ENCODE measurements at regions of chr7 and their contacts with region 1.

Region 1: DNA sequence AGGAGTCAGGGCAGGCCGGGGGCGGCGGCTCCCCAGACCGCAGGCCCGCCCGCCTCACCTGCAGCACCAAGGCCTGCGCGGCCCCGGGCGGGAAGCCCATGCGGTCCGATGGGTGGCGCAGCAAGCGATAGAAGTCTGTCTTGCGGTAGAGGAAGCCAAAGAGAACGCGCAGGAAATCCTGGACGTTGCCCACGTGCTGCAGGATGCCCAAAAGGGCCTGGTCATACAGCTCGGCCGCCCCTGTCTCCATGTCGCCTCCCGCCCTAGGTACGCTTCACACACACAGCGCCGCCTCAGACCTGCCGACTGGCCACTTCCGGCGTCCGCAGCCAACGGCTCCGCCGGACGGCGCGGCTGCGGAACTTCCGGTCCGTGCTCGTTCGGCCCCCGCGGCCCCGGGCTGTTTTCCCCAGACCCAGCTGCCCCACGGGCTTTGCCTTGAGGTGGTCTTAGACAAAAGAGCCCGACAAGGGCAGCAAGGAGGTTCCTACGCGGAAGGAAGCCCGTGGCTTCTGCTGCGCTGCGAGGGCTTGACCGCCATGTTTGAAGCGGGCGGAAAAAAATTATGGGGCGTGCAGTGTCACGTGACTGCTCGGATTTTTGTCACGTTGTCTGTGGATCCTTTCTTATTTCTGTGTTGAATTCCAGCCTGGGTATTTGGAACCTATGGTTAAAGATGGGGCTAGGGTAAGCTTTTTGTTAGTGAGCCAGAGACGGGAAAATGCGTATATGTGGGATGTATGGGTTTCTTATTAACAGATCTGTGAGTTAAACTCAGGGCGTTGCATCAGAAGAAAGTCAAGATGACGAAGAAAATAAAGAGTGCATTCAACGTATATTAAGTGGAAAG is at the start of gene NUDCD3:
- DNase-seq: peak; percentile 74 to 97 (median 84)

Region 2: GRCh38 chr7:44240983-44241510 is 249.5 kb before region 1 on chr7:
- intact Hi-C with region 1: no loop called
- DNase-seq: peak; percentile 50 to 95 (median 70)

Region 3: GRCh38 chr7:44573464-44574286 is 83.1 kb after region 1 on chr7 and contains the start of gene DDX56:
- intact Hi-C with region 1: loop called (anchors 5 kb)
- DNase-seq: peak; percentile 91 to 99 (median 96)